Calu3 (cell line): ENCODE measurements at regions of chrX and their contacts with region 1.

Region 1: GRCh38 chrX:133847340-133847994 is 137.9 kb downstream of the GPC3 start:
- DNase-seq: no peak
- H3K4me3 Mint-ChIP-seq: no peak overlapping the region
- H3K27ac Mint-ChIP-seq: no peak overlapping the region
- H3K4me1 Mint-ChIP-seq: peaks cover 9% of the 10 kb centered on the region
- H3K27me3 Mint-ChIP-seq: no peaks in the 10 kb centered on the region
- CTCF ChIP-seq: no peak

Region 2: DNA sequence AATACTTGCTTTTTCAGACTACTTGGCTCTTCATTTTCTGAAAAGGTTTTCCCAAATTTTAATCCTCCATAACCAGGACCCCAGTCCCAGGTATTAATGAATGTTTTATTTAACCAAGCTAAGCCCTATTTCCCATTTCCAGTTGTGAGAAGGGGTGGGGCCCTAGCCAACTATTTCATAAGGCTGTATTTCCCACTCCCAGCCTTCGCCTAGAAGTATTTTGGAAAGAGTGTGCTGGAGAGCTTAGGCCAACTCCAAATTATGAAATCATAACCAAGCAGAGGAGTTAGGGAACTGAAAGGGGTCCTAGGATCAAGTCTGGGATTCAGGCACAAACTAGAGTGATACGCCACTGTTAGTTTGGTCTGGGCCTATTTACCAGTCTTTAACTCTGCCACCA is 283.8 kb before region 1 on chrX:
- CTCF ChIA-PET with region 1: no interaction called
- intact Hi-C with region 1: no loop called
- DNase-seq: no peak
- H3K4me3 Mint-ChIP-seq: no peak overlapping the region
- H3K27ac Mint-ChIP-seq: no peak overlapping the region
- H3K4me1 Mint-ChIP-seq: no peaks in the 10 kb centered on the region
- H3K27me3 Mint-ChIP-seq: no peaks in the 10 kb centered on the region
- CTCF ChIP-seq: no peak

Region 3: GRCh38 chrX:134026565-134027311 is 179.3 kb after region 1 on chrX:
- CTCF ChIA-PET with region 1: no interaction called
- intact Hi-C with region 1: loop called (anchors 10 kb)
- DNase-seq: peak; percentile 64
- H3K4me3 Mint-ChIP-seq: peak overlapping the region; percentile 53
- H3K27ac Mint-ChIP-seq: no peak overlapping the region
- H3K4me1 Mint-ChIP-seq: peaks cover 9% of the 10 kb centered on the region
- H3K27me3 Mint-ChIP-seq: no peaks in the 10 kb centered on the region
- CTCF ChIP-seq: peak; percentile 60

Region 4: DNA sequence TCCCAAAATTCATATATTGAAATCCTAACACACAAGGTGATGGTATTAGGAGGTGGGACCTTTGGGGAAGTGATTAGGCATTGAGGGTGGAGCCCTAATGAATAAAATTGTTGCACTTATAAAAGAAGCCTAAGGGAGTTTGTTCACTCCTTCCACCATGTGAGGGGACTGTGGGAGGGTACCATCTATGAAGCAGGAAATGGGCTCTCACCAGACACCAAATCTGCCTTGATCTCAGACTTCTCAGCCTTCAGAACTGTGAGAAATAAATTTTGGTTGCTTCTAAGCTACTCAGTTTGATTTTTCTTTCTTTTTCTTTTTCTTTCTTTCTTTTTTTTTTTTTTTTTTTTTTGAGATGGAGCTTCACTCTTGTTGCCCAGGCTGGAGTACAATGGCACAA is 254.2 kb after region 1 on chrX:
- CTCF ChIA-PET with region 1: no interaction called
- intact Hi-C with region 1: no loop called
- DNase-seq: no peak
- H3K4me3 Mint-ChIP-seq: no peak overlapping the region
- H3K27ac Mint-ChIP-seq: no peak overlapping the region
- H3K4me1 Mint-ChIP-seq: no peaks in the 10 kb centered on the region
- H3K27me3 Mint-ChIP-seq: peaks cover 13% of the 10 kb centered on the region
- CTCF ChIP-seq: no peak